ENCODE measurements at regions of chr9 and their contacts with region 1.

Region 1: DNA sequence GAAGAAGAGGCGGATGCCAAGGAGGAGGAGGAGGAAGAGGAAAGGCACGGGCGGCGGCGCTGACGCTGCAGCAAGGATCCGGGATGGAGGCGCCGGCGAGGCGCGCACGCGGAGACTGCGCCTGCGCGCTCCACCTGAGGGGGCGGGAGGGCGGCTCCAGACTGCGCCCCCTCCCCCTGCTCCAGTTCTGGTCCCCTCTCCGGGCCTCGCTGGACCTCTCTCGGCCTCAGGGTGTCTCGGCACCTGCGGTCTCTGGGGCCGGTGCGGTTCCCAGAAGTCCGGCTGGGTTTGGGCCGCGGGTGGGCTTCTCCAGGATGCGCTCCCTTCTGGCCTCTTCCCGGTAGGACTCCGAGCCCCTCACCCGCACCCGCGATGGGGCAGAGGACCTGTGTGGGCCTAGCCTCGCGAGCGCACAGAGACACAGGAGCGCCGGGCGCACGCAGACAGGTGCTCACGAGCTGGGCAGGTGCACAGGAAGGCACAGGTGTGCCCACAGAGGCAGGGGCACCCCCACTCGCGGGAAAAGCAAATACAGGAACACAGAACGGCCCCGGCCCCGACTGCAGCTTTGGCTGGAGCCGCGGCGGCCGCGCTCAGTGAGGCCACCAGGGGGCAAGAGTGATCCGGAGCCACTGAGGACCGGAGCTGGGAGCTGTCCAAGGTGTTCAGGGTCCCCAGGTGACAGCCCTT is at the start of gene NPDC1:
- DNase-seq: peak; percentile 95
- H3K4me3 Mint-ChIP-seq: peak within 1 kb of the TSS; percentile 78
- H3K27ac Mint-ChIP-seq: peak within 1 kb of the TSS; percentile 15
- H3K4me1 Mint-ChIP-seq: peaks cover 7% of the 10 kb centered on the region
- H3K27me3 Mint-ChIP-seq: peaks cover 31% of the 10 kb centered on the region
- total RNA-seq, gene NPDC1: 58.1 and 59.4 TPM in 2 replicates

Region 2: DNA sequence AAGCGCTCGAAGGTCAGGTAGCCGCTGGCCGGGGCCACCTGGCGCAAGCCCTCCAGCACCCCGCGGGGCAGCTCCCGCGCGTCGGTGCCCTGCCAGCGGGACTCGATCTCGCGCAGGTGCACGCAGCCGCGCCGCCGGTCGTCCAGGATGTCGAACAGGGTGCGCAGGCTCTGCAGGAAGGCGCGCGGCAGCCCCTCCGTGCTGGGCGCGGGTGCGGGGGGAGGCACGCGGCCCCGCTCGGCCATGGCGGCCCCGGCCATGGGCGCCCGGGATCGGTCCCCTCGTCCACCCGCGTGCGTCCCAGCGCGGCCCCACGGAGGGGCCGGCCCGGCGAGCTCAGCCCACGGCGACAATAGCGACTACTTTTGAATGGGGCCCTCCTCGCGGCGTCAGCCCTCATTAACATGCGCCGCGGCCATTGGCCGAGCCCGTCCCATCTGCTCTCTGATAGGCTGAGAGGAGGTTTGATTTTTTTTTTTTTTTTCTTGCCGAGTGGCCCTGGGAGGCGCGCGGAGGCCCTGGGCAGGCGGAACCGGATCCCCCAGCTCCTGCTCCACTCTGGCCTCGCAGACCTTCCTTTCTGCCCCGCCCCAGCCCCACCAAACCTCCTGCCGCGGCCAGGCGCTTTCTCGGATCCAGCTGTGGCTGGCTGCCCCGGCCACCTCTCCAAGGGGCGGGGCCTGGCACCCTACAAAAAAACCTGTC is 24.1 kb after region 1 on chr9 and contains the start of gene SAPCD2:
- intact Hi-C with region 1: loop called (anchors 1 kb)
- DNase-seq: peak; percentile 96
- H3K4me3 Mint-ChIP-seq: peak within 1 kb of the TSS; percentile 80
- H3K27ac Mint-ChIP-seq: peak within 1 kb of the TSS; percentile 68
- H3K4me1 Mint-ChIP-seq: peaks cover 20% of the 10 kb centered on the region
- H3K27me3 Mint-ChIP-seq: no peaks in the 10 kb centered on the region
- total RNA-seq, gene SAPCD2: 22.8 and 23.8 TPM in 2 replicates

Region 3: DNA sequence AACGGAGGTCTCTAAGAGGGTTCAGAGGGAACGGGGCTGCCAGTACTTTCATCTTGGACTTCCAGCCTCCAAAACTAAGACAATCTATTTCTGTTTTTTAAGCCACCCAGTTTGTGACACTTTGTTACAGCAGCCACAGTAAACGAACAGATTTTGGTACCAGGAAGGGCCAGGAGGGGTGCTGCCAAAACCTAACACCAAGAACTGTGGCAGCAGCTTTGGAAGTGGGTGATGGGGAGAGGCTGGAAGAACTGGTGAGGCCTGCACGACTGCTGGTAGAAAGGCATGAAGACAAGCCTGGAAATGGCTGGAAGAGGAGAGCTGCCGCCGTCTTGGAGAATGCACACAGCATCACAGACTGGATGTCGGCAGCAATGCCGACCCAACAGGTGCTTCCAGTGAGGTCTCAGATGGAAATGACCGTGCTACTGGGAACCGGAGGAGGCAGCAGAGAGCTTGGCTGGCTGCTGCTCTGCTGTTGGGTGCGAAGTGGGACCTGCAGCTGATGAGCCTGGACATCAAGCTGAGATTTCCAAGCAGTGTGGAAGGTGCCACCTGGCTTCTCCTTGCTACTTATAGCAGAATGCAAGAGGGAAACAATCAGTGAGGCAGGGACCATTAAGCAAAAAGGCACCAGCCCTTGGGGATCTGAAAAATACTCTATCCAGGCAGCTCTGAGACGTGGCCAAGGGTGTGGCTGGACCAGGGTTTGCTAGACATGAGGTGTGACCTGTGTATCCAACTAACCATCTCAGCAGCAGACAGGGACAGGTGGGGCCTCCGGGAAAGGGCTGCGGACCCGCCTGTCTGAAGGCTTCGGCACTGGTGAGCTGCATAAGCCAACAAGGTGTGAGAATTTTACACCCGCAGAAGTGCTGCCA is 130.3 kb after region 1 on chr9:
- intact Hi-C with region 1: loop called (anchors 10 kb)
- DNase-seq: peak; percentile 72
- H3K4me3 Mint-ChIP-seq: no peak overlapping the region
- H3K27ac Mint-ChIP-seq: no peak overlapping the region
- H3K4me1 Mint-ChIP-seq: no peaks in the 10 kb centered on the region
- H3K27me3 Mint-ChIP-seq: peaks cover 10% of the 10 kb centered on the region

Measured in activated CD4-positive, alpha-beta T cell treated with anti-CD3 and anti-CD28 coated beads, Interleukin-2, amount 10 ng/mL, durations not matched to agents 24 days and 14 days (primary cell).